Right ventricle myocardium inferior (tissue), 1 donor: ENCODE measurements at regions of chr7 and their contacts with region 1.

Region 1: GRCh38 chr7:45136106-45137060 is 21.2 kb upstream of the RAMP3 start:
- DNase-seq: no peak
- ATAC-seq: peak; percentile 75

Region 2: DNA sequence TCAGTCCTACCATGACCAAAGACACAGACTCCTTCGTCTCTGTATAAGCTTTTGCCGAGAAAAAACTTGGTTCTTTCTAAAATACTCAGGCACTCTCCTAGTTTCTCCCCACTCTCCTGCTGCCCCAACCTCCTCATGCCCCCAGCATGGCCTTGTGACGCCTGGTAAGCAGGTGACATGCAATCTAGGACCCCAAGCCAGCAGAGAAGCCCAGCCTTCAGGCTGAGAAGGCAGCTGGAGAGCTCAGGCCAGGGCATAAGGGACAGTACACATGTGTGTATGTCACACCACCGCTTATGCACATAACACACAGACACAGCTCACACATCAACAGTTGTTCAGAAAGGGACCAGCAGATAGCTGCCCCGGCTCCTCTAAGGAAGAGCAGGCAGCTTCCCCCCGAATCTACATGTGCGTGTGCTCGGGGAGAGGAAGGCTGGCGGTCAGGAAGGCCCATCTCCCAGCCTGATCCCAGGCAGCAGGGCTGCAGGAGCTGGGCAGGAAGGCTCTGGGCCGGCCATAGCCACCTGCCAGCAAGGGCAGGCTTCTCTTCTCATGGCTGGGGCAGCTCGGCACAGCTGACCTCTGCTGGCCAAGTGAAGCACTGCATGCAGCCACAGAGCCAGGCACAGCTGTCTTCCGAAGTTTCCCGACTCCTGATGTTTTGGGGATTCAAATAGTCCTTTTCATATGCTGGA is 571.1 kb before region 1 on chr7:
- intact Hi-C with region 1: no loop called
- DNase-seq: peak; percentile 84
- ATAC-seq: peak; percentile 83

Region 3: DNA sequence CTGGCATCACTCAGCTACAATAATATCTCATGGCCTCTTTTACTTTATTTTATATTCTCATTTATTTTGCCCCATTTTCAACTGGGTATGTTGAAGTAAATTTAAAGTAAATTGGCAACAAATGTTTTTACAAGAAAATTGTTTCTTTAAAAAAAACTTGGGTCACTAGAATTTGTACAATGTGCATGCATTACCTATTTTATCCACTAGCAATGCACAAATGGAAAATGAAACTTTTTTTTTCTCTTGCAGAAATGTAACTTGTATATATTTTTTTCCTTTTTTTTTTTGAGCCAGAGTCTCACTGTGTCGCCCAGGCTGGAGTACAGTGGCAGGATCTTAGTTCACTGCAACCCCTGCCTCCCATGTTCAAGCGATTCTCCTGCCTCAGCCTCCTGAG is 278.2 kb before region 1 on chr7:
- intact Hi-C with region 1: loop called (anchors 2 kb)
- DNase-seq: no peak
- ATAC-seq: no peak

Region 4: GRCh38 chr7:44973610-44974401 is 162.6 kb before region 1 on chr7:
- intact Hi-C with region 1: loop called (anchors 1 kb)
- DNase-seq: no peak
- ATAC-seq: peak; percentile 45

Region 5: DNA sequence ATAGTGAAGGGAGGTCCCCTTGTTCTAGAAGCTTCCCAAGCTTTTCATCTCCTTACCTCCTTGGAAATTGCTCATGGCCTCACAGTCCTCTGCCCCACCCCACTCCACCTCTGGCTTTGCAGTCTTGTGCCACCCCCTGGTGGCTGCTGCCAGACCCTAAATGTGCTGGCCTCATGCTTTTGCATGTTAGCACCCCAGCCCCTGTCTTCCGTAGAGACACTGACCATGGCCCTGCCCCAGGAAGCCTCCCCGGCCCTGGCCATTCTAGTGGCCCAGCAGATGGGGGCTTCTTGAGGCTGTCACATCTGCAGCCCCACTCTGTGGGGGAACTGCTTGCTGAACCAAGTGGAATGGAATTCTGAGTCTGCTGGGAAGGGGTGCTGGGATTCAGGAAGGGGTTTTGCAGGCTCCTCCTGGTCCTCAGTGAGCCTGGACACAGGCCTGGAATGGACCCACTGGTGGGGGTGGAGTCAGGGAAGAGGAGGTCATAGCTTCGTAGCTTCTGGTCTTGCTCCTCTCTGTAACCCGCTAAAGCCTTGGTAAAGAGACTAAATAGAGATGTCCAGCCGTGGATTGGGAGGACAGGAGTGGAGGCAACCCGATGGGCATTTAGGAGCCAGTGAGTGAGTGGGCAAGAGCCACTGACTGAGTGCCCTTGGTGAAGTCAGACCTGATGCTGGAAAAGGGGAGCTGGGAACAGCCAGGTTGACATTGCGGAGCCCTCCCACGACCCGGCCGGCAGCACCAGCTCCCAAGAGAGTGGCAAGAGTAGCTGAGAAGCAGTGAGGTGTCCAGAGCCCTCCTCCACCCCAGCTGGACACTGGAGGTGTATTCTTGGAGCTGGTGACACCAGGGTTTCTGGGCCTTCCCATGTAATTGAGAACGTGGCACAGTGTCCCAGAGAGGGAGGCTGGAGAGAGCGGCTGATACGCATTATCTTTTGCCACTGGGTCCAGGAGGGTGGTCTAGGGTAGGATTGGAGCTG is 42.1 kb after region 1 on chr7:
- intact Hi-C with region 1: no loop called
- DNase-seq: no peak
- ATAC-seq: no peak